ENCODE measurements at regions of chr13 and their contacts with region 1.

Region 1: GRCh38 chr13:24220086-24220703 is 59.7 kb downstream of the SPATA13 start:
- DNase-seq: no peak
- ATAC-seq: peak; percentile 90

Region 2: GRCh38 chr13:23776698-23777574 is 443.3 kb before region 1 on chr13:
- intact Hi-C with region 1: no loop called
- DNase-seq: no peak
- ATAC-seq: no peak

Region 3: GRCh38 chr13:23921451-23921888 is 298.7 kb before region 1 on chr13:
- intact Hi-C with region 1: loop called (anchors 2 kb)
- DNase-seq: no peak
- ATAC-seq: peak; percentile 39

Region 4: GRCh38 chr13:24020375-24020830 is 199.8 kb before region 1 on chr13:
- intact Hi-C with region 1: loop called (anchors 5 kb)
- DNase-seq: no peak
- ATAC-seq: peak; percentile 66

Region 5: GRCh38 chr13:24053519-24054251 is 166.5 kb before region 1 on chr13:
- intact Hi-C with region 1: loop called (anchors 5 kb)
- DNase-seq: no peak
- ATAC-seq: peak; percentile 75